Kidney (tissue), 22 donors: ENCODE measurements at regions of chr22 and their contacts with region 1.

Region 1: GRCh38 chr22:38868886-38869381 is 3.1 kb downstream of the CBX6 start:
- DNase-seq: peak; percentile 77 to 92 (median 83)
- H3K4me3 ChIP-seq: no peak overlapping the region
- H3K27ac ChIP-seq: no peak overlapping the region
- H3K4me1 ChIP-seq: peaks cover 0 to 27% (median 9%) of the 10 kb centered on the region in 3 donors
- H3K27me3 ChIP-seq: no peaks in the 10 kb centered on the region
- CTCF ChIP-seq: peak; percentile 84

Region 2: GRCh38 chr22:38681784-38682335 is 187.1 kb before region 1 on chr22 and contains the start of gene TOMM22:
- intact Hi-C with region 1: no loop called
- DNase-seq: peak; percentile 90 to 96 (median 94)
- H3K4me3 ChIP-seq: peak within 1 kb of the TSS; percentile 87 to 96 (median 94)
- H3K27ac ChIP-seq: peak within 1 kb of the TSS in 1 of 2 donors; percentile 41
- H3K4me1 ChIP-seq: peaks cover 0 to 7% (median 5%) of the 10 kb centered on the region in 3 donors
- H3K27me3 ChIP-seq: no peaks in the 10 kb centered on the region
- CTCF ChIP-seq: peak; percentile 70
- total RNA-seq, gene TOMM22: 55.0 TPM

Region 3: DNA sequence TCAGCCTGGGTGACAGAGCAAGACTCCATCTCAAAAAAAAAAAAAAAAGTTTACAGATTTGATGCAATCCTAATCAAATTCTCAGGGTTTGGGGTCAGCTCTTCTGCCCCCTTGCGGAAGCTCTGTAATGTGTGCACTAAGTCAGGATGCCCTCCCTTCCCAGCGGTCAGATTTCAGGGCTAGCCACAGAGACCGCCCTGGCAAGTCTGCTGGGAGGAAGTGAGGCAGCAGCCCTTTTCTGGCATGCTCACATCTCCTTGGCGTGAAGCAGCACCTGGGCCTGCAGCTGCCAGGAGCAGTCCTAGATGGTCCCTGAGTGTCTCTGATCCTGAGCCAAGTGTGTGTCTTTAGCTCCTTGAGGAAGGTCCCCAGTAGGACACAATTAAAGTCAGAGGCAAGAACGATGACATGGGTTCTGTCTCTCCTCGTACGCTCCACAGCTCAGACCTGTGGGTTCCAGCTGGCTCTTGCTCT is 134.3 kb after region 1 on chr22:
- intact Hi-C with region 1: loop called (anchors 10 kb)
- DNase-seq: peak; percentile 79 to 92 (median 89)
- H3K4me3 ChIP-seq: no peak overlapping the region
- H3K27ac ChIP-seq: no peak overlapping the region
- H3K4me1 ChIP-seq: no peaks in the 10 kb centered on the region
- H3K27me3 ChIP-seq: no peaks in the 10 kb centered on the region
- CTCF ChIP-seq: peak; percentile 76

Region 4: DNA sequence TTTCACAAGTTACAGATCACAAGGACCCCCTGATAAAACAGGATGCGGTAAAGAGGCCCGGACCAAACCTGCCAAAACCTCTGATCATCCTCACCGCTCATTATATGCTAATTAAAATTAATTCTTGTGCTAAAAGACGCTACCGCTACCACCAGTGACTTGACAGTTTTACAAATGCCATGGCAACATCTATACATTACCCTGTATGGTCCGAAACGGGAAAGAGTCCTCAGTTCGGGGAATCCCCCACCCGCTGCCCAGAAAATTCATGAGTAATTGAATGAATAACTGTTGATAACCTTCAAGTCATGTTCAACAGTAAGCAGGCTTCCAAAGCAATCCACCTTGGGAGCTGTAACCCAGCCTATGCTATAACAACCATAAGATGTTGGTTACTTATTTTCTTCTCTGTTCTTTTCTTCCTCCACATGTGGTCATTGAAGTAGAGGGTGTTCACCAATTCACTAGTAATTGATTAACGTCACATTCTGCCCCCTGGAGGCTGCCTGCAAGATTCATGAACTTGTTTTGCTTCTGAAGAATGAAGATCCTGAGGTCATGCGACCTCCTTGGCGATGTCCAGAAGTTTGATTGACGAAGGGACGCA is 248.8 kb after region 1 on chr22:
- intact Hi-C with region 1: loop called (anchors 10 kb)
- DNase-seq: peak in 4 of 5 donors; percentile 46 to 60 (median 51)
- H3K4me3 ChIP-seq: no peak overlapping the region
- H3K27ac ChIP-seq: no peak overlapping the region
- H3K4me1 ChIP-seq: peaks cover 0 to 4% (median 0%) of the 10 kb centered on the region in 3 donors
- H3K27me3 ChIP-seq: peaks cover 4% of the 10 kb centered on the region
- CTCF ChIP-seq: peak; percentile 38